ENCODE measurements at regions of chr17 and their contacts with region 1.

Region 1: GRCh38 chr17:7219812-7220581 is at the starts of genes ACADVL and DLG4:
- DNase-seq: peak; percentile 95 to 98
- H3K4me3 ChIP-seq: peak within 1 kb of the TSS; percentile 77
- H3K27ac ChIP-seq: peak within 1 kb of the TSS; percentile 98
- H3K4me1 ChIP-seq: peaks cover 36% of the 10 kb centered on the region
- H3K27me3 ChIP-seq: no peaks in the 10 kb centered on the region
- CTCF ChIP-seq: no peak
- total RNA-seq, gene ACADVL: 531 and 604 TPM in 2 replicates
- total RNA-seq, gene DLG4: 27.1 and 32.8 TPM in 2 replicates

Region 2: GRCh38 chr17:7234083-7234951 is 14.3 kb after region 1 on chr17 and contains the start of gene DVL2:
- CTCF ChIA-PET with region 1: interaction called, 4 read pairs
- POLR2A ChIA-PET with region 1: interaction called, 10 read pairs
- intact Hi-C with region 1: no loop called
- DNase-seq: peak; percentile 78 to 95
- H3K4me3 ChIP-seq: peak within 1 kb of the TSS; percentile 82
- H3K27ac ChIP-seq: peak within 1 kb of the TSS; percentile 57
- H3K4me1 ChIP-seq: peaks cover 38% of the 10 kb centered on the region
- H3K27me3 ChIP-seq: no peaks in the 10 kb centered on the region
- CTCF ChIP-seq: no peak
- total RNA-seq, gene DVL2: 77.9 and 86.8 TPM in 2 replicates